ENCODE measurements at regions of chr4 and their contacts with region 1.

Region 1: GRCh38 chr4:169619959-169620879 is at the start of gene CLCN3:
- DNase-seq: peak; percentile 98 to 99 (median 98)
- H3K4me3 ChIP-seq: peak within 1 kb of the TSS; percentile 21 to 96 (median 54)
- H3K27ac ChIP-seq: peak within 1 kb of the TSS; percentile 81 to 98 (median 95)
- H3K4me1 ChIP-seq: peaks cover 16 to 26% of the 10 kb centered on the region in 2 donors
- H3K27me3 ChIP-seq: no peaks in the 10 kb centered on the region
- CTCF ChIP-seq: peak in 2 of 6 experiments; percentile 5 to 40
- POLR2A ChIP-seq: peak; percentile 86 to 96
- total RNA-seq, gene CLCN3: 50.9 to 86.7 (median 65.6) TPM

Region 2: DNA sequence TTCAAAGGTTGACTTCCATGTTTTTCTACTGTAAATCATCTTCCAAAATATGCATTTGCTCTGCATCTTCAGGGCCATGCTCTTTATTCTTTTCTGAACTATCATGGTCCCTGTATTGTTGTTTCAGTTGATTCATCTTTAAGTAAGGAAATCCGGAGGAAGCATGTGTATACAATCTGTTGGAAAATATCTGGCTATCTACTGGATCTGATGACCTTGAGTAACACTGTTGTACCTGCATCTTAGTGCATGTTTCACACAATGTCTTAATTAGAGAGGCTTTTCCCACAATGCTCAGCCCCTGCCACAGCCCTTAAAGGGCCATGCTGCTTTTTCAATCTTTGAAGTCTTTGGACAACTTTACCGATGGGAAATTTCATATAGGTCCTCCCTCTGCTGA is 287.6 kb before region 1 on chr4:
- intact Hi-C with region 1: no loop called
- DNase-seq: no peak
- H3K4me3 ChIP-seq: no peak overlapping the region
- H3K27ac ChIP-seq: no peak overlapping the region
- H3K4me1 ChIP-seq: no peaks in the 10 kb centered on the region
- H3K27me3 ChIP-seq: no peaks in the 10 kb centered on the region
- CTCF ChIP-seq: no peak
- POLR2A ChIP-seq: no peak

Region 3: DNA sequence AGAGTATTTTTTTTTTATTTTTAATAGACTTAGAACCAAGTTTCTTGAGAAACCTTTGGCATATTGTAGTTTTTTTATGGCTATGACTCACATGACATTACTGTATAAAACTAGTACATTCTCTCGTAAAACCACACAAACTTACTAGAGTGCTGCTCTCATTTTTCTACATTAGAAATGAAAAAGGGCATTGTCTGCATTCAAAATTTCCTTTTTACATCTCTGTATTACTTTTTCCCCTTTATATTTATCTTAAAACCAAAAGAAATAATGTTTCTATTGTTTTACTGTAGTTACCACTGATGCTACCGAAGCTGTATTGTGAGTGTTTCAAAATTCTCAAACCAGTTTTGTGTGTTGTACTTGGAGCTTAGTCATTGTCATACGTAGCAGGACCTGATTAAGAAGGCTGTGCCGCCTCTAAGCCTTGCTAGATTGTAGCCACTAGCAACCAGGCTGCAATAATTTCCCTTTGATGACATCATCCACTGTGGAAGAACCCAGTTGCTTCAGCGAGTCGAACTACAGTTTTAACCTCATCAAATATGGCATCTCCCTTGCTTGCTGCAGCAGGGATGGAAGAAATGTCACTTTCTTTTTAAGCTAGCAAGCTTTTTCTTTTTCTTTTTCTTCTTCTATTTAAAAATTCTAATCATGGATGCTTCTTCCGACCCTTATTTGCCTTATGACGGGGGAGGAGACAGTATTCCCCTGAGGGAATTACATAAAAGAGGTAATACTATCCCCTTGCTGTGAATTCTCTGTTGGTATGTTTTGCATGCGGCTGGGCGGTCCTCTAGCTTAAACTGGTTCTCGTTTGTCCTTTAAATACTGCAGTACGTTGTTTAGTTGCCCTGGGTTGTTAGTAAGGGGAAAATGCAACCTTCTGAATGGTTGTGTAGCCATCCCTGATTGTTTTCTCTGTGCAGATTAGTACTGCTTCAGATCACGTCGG is 39.8 kb after region 1 on chr4:
- intact Hi-C with region 1: loop called in 1 of 2 experiments (anchors 5 kb)
- DNase-seq: peak; percentile 80 to 97 (median 91)
- H3K4me3 ChIP-seq: peak overlapping the region in 2 of 4 donors; percentile 20 to 51
- H3K27ac ChIP-seq: peak overlapping the region; percentile 8 to 91 (median 87)
- H3K4me1 ChIP-seq: peaks cover 7 to 41% of the 10 kb centered on the region in 2 donors
- H3K27me3 ChIP-seq: no peaks in the 10 kb centered on the region
- CTCF ChIP-seq: no peak
- POLR2A ChIP-seq: peak in 1 of 2 donors; percentile 88

Region 4: DNA sequence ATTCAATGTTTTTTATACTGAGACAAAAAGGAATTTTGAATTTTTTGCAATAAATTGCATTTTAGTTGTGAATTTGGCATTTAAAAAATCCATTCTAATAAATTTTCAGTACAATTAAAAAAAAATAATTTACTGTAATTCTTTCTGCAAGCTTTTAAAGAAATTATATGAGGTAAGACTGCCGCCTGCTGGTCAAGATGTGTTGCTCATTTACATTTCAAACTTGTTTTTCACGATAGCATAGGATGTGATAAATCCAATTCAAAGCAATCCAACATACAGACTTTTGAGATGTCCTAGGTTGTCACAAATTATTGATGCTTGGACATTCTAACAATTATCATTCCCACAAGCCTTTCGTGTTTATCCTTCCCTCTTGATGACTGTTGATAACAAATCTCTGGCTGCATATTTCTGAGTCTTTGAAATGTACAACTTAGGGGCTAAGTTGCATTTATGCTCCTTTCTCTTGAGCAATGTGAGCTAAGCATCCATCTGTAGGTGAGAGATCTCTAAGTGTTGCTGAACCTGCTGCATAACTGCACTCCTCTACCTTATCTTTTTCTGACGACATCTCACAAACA is 427.6 kb after region 1 on chr4:
- intact Hi-C with region 1: loop called in 1 of 2 experiments (anchors 10 kb)
- DNase-seq: peak; percentile 25 to 83 (median 55)
- H3K4me3 ChIP-seq: no peak overlapping the region
- H3K27ac ChIP-seq: no peak overlapping the region
- H3K4me1 ChIP-seq: no peaks in the 10 kb centered on the region
- H3K27me3 ChIP-seq: peaks cover 16% of the 10 kb centered on the region
- CTCF ChIP-seq: peak; percentile 59 to 88 (median 79)
- POLR2A ChIP-seq: no peak

Measured in adrenal gland (tissue), 19 donors.